ENCODE measurements at regions of chr4 and their contacts with region 1.

Region 1: DNA sequence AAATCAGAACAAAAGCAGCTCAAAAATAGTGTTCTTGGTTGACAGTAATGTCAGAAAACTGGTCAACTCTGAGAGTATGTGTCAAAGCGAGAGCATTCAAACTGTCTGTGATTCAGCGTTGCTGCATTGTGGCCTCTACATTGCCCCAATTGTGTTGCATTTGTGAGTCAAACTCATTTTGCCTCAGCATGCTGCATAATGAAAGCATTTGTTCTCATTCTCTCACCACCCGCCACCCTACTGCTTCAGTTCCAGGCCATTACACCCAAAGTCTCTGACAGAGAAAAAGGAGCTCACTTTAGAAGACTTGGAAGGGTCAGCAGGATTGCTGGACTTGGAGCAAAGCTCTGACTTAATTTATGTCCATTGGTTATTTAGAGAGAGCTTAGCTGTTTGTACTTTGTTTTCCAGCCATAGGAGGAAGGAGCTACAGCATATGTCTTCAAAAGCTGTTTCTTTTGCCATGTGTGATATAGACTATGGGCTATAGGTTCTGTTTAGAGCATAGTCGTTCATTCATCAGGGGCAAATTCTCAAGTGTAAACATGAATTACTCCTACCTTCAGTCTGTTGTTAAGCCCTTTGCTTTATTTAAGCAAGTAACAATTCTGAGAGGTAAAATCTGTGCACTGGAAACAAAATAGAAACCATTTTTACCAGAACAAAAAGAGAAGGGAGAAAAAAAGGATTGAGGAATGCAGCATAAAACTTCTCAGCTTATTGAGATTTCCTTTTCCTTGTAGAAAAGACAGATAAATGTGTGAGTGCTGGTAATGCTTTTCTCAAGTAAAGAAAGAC is 153.4 kb upstream of the ANK2 start:
- DNase-seq: no peak
- ATAC-seq: no peak
- H3K4me3 ChIP-seq: no peak overlapping the region
- H3K27ac ChIP-seq: no peak overlapping the region
- H3K4me1 ChIP-seq: no peaks in the 10 kb centered on the region
- H3K27me3 ChIP-seq: no peaks in the 10 kb centered on the region
- CTCF ChIP-seq: no peak
- EP300 ChIP-seq: no peak
- POLR2A ChIP-seq: no peak
- RAD21 ChIP-seq: no peak

Region 2: DNA sequence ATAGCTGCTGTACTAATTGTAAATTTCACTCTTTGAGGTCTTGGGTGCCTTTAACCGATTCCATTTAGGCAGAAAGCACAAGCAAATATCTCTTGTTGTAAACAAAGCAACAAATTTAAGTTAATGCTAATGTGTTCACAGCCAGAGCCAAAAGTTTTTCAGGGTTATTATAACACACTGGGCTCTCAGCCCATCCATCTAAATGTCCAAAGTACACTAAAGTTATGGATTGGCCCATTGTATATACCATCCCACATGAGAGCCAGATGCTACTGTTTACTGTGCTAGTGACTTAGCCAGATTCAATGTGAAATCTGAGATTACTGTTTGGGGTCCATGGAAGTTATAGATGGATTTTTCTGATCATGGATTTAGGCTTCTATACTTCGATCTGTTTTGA is 72.4 kb before region 1 on chr4:
- CTCF ChIA-PET with region 1: no interaction called
- POLR2A ChIA-PET with region 1: no interaction called
- in situ Hi-C with region 1: no loop called
- intact Hi-C with region 1: no loop called
- DNase-seq: no peak
- ATAC-seq: no peak
- H3K4me3 ChIP-seq: no peak overlapping the region
- H3K27ac ChIP-seq: no peak overlapping the region
- H3K4me1 ChIP-seq: no peaks in the 10 kb centered on the region
- H3K27me3 ChIP-seq: no peaks in the 10 kb centered on the region
- CTCF ChIP-seq: no peak
- EP300 ChIP-seq: no peak
- POLR2A ChIP-seq: no peak
- RAD21 ChIP-seq: no peak

Region 3: DNA sequence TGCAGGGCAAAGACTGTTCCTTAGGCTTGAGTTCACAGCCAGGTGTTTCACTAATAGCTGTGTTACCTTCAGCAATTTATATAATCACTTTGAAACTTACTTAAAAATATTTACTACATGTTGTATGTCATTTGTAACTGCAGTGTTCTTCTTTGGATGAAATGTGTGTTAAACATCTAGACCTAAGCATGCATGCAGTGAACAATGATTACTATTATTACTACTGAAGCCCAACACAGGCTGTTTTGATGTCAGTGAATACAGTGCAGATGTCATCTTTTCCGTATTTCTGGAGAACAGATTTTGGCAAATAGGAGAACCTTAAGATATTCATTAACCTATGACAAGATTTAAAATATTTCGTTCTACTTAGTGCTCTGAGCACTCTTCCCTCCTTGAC is 51.6 kb after region 1 on chr4:
- CTCF ChIA-PET with region 1: no interaction called
- POLR2A ChIA-PET with region 1: no interaction called
- in situ Hi-C with region 1: no loop called
- intact Hi-C with region 1: loop called (anchors 2 kb)
- DNase-seq: no peak
- ATAC-seq: no peak
- H3K4me3 ChIP-seq: no peak overlapping the region
- H3K27ac ChIP-seq: no peak overlapping the region
- H3K4me1 ChIP-seq: no peaks in the 10 kb centered on the region
- H3K27me3 ChIP-seq: no peaks in the 10 kb centered on the region
- CTCF ChIP-seq: no peak
- EP300 ChIP-seq: no peak
- POLR2A ChIP-seq: no peak
- RAD21 ChIP-seq: no peak

Measured in K562 (cell line).